ENCODE measurements at regions of chr1 and their contacts with region 1.

Region 1: DNA sequence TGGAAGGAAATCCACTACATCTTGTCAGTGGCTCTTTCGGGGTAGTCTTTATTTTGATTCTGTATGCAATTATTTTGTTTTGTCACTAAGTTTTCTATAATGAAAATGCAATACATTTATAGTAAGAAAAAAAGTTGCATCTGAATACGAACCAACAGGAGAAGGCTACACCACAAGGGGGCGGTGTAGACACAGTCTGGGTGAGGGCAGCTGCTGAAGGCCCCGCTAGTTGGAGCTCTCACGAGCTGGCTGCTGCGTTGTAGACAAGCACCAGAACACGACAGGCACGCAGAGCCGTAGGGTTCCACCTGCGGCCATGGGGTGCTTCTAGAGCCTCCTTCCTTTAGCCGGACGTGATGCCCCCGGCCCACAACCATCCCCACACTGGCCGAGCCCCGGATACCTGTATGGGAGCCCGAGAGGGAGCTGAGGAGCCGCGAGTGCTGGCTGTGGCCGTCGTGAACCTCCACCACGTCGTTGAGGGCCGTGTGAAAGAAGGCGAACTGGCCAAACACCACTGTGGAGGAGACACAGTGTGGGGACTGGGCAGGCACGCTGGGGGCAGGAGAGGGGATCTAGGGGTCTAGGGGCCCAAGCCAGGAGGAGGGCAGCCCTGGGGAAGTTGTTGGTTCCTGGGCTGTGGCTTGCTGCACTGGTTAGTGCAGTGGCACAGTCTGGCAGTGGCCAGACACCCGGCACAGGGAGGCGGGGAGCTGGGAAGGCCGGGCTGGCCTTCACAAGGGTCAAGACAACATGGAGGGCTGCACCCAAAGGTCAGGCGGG is 160.8 kb downstream of the ZSCAN20 start:
- DNase-seq: no peak
- H3K4me3 ChIP-seq: no peak overlapping the region
- H3K27ac ChIP-seq: no peak overlapping the region
- H3K4me1 ChIP-seq: peaks cover 3 to 6% (median 4%) of the 10 kb centered on the region in 4 donors
- H3K27me3 ChIP-seq: peaks cover 0 to 31% (median 0%) of the 10 kb centered on the region in 4 donors
- CTCF ChIP-seq: peak; percentile 95 to 99 (median 96)
- EP300 ChIP-seq: no peak
- POLR2A ChIP-seq: no peak

Region 2: DNA sequence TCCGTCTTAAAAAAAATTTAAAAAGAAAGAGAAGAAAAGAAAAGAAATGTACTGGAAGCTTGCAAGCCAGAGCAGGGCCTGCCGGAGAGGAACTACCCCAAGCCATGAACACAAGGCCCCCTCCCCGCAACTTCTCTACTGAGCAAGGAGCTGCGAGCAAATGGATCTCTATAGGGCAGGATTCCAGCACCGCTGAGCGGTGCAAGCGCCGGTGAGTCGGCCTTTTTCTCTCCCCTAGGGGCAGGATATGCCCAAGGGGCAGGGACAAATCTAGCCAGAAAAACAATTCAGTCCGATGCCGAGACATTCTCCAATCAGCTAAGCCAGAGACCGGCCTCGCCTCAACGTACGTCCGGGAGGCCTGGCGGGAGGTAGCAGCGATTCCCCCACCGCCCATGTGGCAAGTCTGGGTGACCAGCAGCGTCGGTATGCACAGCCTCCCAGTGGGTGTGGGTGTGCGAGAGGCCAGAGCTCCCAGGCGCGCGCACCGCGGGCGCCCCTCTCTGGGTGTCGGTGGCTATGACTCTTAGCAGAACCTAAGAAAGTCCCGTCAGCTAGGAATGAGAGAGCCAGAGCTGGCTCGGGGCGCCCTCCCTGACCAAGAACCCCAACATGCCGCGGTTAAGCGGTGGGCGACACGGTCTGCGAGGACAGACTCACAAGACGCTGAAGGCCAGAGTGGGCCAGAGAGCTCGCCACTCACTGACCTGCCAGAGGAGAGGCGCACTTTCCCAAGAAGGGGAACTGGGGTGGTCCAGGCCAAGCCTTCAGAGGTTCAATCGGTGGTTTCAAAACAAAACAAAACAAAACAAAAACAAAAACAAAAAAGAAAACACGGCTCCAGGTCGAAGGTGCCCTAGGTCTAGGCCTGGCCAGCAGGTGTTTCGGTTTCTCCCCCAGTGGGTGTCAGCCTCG is 529.9 kb after region 1 on chr1:
- intact Hi-C with region 1: loop called (anchors 10 kb)
- DNase-seq: no peak
- H3K4me3 ChIP-seq: peak overlapping the region; percentile 49 to 59 (median 50)
- H3K27ac ChIP-seq: no peak overlapping the region
- H3K4me1 ChIP-seq: peaks cover 27 to 49% (median 45%) of the 10 kb centered on the region in 4 donors
- H3K27me3 ChIP-seq: peaks cover 0 to 98% (median 39%) of the 10 kb centered on the region in 4 donors
- CTCF ChIP-seq: peak; percentile 25 to 50 (median 41)
- EP300 ChIP-seq: no peak
- POLR2A ChIP-seq: no peak

Region 3: GRCh38 chr1:34597877-34598514 is 964.8 kb after region 1 on chr1:
- intact Hi-C with region 1: loop called (anchors 5 kb)
- DNase-seq: no peak
- H3K4me3 ChIP-seq: no peak overlapping the region
- H3K27ac ChIP-seq: no peak overlapping the region
- H3K4me1 ChIP-seq: no peaks in the 10 kb centered on the region
- H3K27me3 ChIP-seq: peaks cover 0 to 42% (median 0%) of the 10 kb centered on the region in 4 donors
- CTCF ChIP-seq: peak; percentile 17 to 54 (median 26)
- EP300 ChIP-seq: no peak
- POLR2A ChIP-seq: no peak

Region 4: DNA sequence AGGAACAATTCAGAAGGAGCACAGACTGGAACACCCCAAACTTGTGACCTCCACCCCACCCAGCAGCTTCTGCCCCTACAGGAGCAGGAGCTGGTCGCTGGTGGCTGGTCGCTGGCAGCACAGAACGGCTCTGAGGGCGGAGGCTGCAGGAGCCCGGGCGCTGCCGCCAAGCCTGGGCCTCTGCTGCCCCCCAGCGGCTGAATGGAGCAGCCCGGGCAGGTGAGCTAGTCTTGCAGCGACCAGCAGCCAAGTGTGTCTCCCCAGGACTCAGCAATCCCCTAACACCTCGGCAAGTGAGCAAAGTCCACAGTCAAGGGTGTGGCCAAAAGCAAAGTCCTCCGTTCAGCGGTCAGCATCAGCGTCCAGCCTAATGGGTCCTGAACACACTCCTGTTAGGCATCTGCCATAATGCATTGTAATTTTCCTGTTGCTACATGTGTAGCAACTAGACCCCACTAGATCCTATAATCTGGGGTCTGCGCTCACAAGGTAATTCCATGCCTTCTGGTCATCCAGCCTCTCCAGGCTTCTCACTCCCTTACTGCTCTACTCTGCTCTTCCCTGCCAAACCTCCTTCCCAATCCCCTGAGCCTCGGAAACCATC is 1109.6 kb after region 1 on chr1:
- intact Hi-C with region 1: loop called (anchors 2 kb)
- DNase-seq: no peak
- H3K4me3 ChIP-seq: no peak overlapping the region
- H3K27ac ChIP-seq: no peak overlapping the region
- H3K4me1 ChIP-seq: peaks cover 0 to 3% (median 0%) of the 10 kb centered on the region in 4 donors
- H3K27me3 ChIP-seq: peaks cover 0 to 51% (median under 1%) of the 10 kb centered on the region in 4 donors
- CTCF ChIP-seq: peak; percentile 82 to 97 (median 86)
- EP300 ChIP-seq: no peak
- POLR2A ChIP-seq: no peak

Measured in esophagus muscularis mucosa (tissue), 4 donors.